HAP-1 (cell line): ENCODE measurements at regions of chr2 and their contacts with region 1.

Region 1: DNA sequence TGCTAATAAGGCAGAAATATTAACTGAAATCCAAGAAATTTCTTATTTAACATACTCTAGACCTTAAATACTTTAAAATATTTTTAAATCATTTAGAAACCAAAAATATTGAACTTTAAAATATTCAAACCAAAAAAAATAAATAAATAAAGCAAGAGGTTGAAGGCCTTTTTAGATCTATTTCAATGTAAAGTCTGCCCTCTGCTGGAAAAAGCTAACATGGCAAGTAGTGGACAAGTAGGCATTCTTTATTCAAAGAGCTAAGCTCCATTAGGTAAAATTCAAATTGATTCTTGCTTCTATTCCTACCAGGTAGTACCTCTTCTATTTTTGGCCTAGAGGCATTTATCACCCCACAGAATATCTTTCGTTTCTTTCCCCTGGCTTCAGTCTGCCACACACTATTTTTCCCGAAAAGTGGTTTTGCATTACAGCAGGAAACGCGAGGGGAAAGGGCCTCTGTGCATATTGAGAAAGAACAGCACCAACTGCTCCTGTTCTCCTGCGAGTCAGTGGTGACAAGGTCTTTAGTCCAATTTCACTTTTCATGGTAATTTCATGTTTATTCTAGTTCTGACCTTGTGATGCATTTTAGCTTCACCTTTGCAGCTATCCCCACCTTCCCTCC is 20.4 kb downstream of the IFIH1 start:
- DNase-seq: peak; percentile 61 to 83
- H3K4me3 ChIP-seq: no peak overlapping the region
- H3K4me1 ChIP-seq: no peaks in the 10 kb centered on the region
- H3K27me3 ChIP-seq: peaks cover 7% of the 10 kb centered on the region; the same call in 1 of the 2 replicates

Region 2: DNA sequence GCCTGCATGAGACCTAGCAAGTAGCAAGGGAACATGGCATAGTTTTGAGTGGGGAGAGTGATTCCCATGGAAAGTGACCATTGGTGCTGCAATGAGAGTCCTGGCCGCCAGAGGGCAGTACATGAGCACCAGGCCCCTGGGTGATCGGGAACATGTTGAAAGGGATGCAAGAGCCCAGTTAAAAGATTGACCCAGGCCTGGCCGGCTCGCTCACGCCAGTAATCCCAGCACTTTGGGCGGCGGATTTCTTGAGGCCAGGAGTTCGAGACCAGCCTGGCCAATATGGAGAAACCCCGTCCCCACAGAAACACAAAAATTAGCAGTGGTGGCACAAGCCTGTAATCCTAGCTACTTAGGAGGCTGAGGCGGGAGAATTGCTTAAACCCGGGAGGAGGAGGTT is 77.0 kb before region 1 on chr2:
- in situ Hi-C with region 1: loop called (anchors 5 kb)
- DNase-seq: peak; percentile 63 to 81
- H3K4me3 ChIP-seq: no peak overlapping the region
- H3K4me1 ChIP-seq: no peaks in the 10 kb centered on the region
- H3K27me3 ChIP-seq: peaks cover 5% of the 10 kb centered on the region; the same call in 1 of the 2 replicates

Region 3: DNA sequence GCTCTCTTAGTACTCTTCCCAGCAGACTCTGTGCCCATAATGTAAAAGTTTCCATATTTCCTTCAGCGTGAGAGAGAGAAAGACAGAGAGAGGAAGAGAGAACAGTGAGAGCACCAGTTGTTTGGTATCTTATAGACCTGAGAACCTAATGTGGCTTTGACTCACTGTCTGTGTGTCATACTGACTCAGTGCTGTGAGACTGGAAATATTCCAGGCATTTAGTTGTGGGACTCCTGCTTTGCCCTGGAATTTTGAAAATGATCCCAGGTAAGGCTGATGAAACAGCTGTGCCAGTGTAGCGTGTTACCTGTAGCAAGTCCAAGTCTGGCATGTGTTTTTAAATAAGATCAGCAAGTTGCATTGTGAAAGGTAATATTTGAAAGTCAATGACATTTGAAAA is 628.5 kb after region 1 on chr2:
- in situ Hi-C with region 1: no loop called
- DNase-seq: no peak
- H3K4me3 ChIP-seq: no peak overlapping the region
- H3K4me1 ChIP-seq: no peaks in the 10 kb centered on the region
- H3K27me3 ChIP-seq: no peaks in the 10 kb centered on the region

Region 4: GRCh38 chr2:163191372-163191771 is 893.3 kb after region 1 on chr2:
- in situ Hi-C with region 1: no loop called
- DNase-seq: peak; percentile 33 to 45
- H3K4me3 ChIP-seq: no peak overlapping the region
- H3K4me1 ChIP-seq: no peaks in the 10 kb centered on the region
- H3K27me3 ChIP-seq: no peaks in the 10 kb centered on the region